GM10248 (cell line): ENCODE measurements at regions of chr3 and their contacts with region 1.

Region 1: GRCh38 chr3:52220380-52221026 is 4.9 kb downstream of the TLR9 start:
- DNase-seq: peak; percentile 85
- CTCF ChIP-seq: peak; percentile 97

Region 2: GRCh38 chr3:52231502-52232293 is 11.2 kb after region 1 on chr3:
- CTCF ChIA-PET with region 1: interaction called, 98 read pairs
- POLR2A ChIA-PET with region 1: interaction called, 3 read pairs
- DNase-seq: peak; percentile 81
- CTCF ChIP-seq: peak; percentile 96

Region 3: GRCh38 chr3:52245322-52246263 is 25.1 kb after region 1 on chr3 and contains the start of gene PPM1M:
- CTCF ChIA-PET with region 1: interaction called, 22 read pairs
- POLR2A ChIA-PET with region 1: interaction called, 3 read pairs
- DNase-seq: peak; percentile 72
- CTCF ChIP-seq: no peak

Region 4: DNA sequence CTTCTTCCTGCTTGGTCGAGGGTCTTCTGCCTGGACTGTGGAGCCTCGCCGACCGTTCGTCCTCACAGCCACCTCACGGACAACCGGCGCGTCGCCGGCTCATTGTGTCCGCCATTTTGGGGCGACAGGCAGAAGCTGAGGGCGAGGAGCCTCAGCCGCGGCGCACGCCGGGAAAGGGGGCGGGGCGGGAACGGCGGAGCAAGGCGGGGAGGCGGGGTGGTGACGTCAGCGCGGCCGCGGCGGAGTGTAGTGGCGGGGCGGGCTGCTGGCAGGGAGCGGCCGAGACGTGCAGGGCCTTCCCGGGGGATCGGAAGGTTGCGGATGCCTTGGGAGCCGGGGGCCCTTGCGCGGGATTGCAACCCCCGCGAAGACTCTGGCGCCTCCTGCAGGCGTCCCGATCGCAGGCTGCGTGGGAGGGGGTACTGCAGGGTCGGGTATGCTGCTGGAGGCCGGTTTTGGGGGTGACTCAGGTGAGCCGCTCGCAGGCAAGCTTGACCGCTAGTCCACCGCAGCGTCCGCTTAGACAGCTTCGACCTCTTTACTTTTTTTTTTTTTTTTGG is 58.1 kb after region 1 on chr3 and contains the start of gene WDR82:
- CTCF ChIA-PET with region 1: interaction called, 25 read pairs
- POLR2A ChIA-PET with region 1: interaction called, 4 read pairs
- DNase-seq: peak; percentile 96
- CTCF ChIP-seq: no peak

Region 5: DNA sequence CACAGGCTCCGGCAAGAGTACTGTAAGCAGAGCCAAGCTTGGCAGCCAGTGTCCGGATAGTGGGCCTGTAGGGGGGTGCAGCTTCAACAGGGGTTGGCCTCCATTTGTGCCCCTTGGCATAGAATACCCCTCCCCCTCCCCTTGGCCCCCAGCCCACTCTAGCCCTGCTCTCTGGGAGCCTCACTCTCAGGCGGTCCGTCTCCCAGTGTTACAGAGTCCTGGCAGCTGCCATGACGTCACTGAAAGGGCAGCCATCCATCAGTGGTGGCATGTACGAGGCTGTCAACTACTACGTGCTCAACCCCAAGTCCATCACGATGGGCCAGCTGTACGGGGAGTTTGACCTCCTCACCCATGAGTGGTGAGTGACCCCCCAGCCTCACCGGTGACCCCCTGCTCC is 146.0 kb after region 1 on chr3:
- CTCF ChIA-PET with region 1: interaction called, 12 read pairs
- POLR2A ChIA-PET with region 1: no interaction called
- DNase-seq: no peak
- CTCF ChIP-seq: no peak

Region 6: DNA sequence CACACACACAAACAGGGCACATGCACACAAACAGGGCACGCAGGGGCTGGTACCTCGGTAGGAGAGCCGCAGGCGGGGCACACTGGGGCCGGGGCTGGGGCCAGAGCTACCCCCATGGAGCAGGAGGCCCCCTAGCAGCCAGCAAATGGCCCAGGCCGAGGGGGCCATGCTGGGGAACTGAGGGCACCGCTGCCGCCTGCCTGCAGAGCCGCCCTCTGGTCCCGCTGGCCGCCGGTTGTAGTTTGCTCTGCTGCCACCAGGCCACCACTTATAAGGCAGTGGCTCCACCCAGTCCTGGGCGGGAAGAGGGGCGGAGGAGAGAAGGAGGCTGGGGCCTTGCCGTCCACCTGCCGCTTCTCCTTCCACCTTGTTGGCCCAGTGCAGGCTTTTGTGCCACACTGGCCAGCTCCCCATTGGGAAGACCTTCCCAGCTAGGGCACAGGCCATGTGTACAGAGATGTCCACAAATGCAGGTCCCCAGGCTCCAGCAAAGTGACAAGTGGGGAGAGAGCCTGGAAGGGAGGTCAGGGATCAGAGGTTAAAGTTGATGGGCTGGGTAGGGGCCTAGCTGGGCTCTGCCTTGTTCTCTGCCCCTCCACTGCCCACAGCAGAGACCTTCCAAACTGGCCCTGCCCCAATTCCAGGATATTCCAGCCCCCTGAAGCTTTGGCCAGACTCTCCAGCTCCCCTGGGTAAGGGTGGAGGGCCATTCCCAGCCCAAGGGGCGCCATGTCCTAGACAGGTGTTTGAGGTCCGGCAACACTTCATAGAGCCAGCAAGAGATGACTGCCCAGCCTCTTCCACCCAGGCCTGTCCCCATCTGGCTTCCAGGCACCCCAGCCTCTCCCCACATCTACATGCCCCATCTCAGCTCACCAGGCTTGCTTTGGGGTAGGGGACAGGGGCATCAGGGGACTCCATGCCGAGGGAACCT is 224.6 kb after region 1 on chr3 and contains the start of gene SEMA3G:
- CTCF ChIA-PET with region 1: interaction called, 39 read pairs
- POLR2A ChIA-PET with region 1: interaction called, 3 read pairs
- DNase-seq: peak; percentile 85
- CTCF ChIP-seq: peak; percentile 39